ENCODE measurements at regions of chr6 and their contacts with region 1.

Region 1: GRCh38 chr6:49835140-49835539 is 31.2 kb downstream of the CRISP1 start:
- DNase-seq: no peak
- ATAC-seq: no peak
- H3K4me3 ChIP-seq: no peak overlapping the region
- H3K4me3 Mint-ChIP-seq: no peak overlapping the region
- H3K27ac ChIP-seq: no peak overlapping the region
- H3K27ac Mint-ChIP-seq: no peak overlapping the region
- H3K4me1 ChIP-seq: no peaks in the 10 kb centered on the region
- H3K4me1 Mint-ChIP-seq: no peaks in the 10 kb centered on the region
- H3K27me3 ChIP-seq: no peaks in the 10 kb centered on the region
- H3K27me3 Mint-ChIP-seq: no peaks in the 10 kb centered on the region
- CTCF ChIP-seq: no peak

Region 2: DNA sequence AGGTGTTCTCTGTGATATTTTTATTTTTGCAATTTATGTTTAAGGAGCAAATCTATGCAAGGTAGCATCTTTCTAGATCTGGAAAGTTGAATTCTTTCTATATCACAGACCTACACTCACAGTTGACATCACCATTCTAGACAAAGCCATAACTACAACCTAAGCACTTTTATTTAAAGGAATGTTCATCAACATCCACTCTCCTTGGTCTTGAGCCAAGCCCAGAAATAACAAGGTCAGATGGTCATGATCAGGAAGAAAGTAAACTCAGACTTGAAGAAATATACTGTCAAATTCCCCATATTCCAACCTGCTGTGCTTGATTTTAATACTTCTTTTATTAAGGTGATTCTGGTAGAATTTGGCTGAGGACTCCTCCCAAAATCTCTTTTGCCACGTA is 404.3 kb before region 1 on chr6:
- intact Hi-C with region 1: no loop called
- DNase-seq: no peak
- ATAC-seq: no peak
- H3K4me3 ChIP-seq: no peak overlapping the region
- H3K4me3 Mint-ChIP-seq: no peak overlapping the region
- H3K27ac ChIP-seq: no peak overlapping the region
- H3K27ac Mint-ChIP-seq: no peak overlapping the region
- H3K4me1 ChIP-seq: no peaks in the 10 kb centered on the region
- H3K4me1 Mint-ChIP-seq: no peaks in the 10 kb centered on the region
- H3K27me3 ChIP-seq: no peaks in the 10 kb centered on the region
- H3K27me3 Mint-ChIP-seq: no peaks in the 10 kb centered on the region
- CTCF ChIP-seq: no peak

Region 3: GRCh38 chr6:49531774-49532569 is 303.2 kb before region 1 on chr6:
- intact Hi-C with region 1: loop called (anchors 10 kb)
- DNase-seq: peak in 1 of 2 donors; percentile 48
- ATAC-seq: peak in 2 of 3 donors; percentile 55 to 66
- H3K4me3 ChIP-seq: no peak overlapping the region
- H3K4me3 Mint-ChIP-seq: peak overlapping the region; percentile 10
- H3K27ac ChIP-seq: no peak overlapping the region
- H3K27ac Mint-ChIP-seq: no peak overlapping the region
- H3K4me1 ChIP-seq: no peaks in the 10 kb centered on the region
- H3K4me1 Mint-ChIP-seq: no peaks in the 10 kb centered on the region
- H3K27me3 ChIP-seq: no peaks in the 10 kb centered on the region
- H3K27me3 Mint-ChIP-seq: no peaks in the 10 kb centered on the region
- CTCF ChIP-seq: peak; percentile 63

Region 4: DNA sequence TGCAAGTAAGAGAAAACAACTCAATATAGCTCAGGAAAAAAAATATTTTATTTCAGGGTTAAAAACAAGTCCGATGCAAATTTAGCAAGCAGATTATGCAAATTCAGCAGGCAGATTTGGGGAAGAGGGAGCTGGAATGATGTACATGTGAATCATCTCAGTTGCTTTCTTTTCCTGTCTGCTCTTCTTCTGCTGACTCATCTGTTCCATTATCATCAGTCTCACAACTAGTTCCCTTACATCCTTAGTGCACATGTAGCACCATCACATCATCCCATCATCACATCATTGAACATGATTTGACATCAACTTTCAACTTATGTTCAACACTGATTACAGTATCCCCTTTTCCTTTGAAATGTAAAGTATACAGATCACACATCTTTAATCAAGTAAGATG is 145.8 kb after region 1 on chr6:
- intact Hi-C with region 1: no loop called
- DNase-seq: no peak
- ATAC-seq: no peak
- H3K4me3 ChIP-seq: no peak overlapping the region
- H3K4me3 Mint-ChIP-seq: no peak overlapping the region
- H3K27ac ChIP-seq: no peak overlapping the region
- H3K27ac Mint-ChIP-seq: no peak overlapping the region
- H3K4me1 ChIP-seq: no peaks in the 10 kb centered on the region
- H3K4me1 Mint-ChIP-seq: peaks cover 0 to 3% of the 10 kb centered on the region in 2 donors
- H3K27me3 ChIP-seq: no peaks in the 10 kb centered on the region
- H3K27me3 Mint-ChIP-seq: no peaks in the 10 kb centered on the region
- CTCF ChIP-seq: no peak

Region 5: DNA sequence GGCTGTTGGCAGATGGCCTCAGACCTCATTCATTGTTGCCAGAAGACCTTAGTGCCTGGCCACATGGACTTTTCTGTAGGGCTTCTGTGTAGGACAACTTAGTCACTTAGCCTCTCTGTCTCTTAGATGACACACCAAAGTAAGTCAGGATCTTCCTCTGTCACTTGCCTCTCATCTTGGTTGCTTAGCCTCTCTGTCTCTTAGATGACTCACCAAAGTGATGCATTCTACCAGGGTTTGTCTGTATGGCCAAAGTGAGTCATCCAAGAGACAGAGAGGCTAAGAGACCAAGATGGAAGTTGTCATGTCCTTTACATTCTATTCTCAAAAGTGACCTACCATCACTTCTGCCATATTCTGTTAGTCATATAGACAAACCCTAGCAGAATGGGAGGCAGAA is 470.5 kb after region 1 on chr6:
- intact Hi-C with region 1: no loop called
- DNase-seq: no peak
- ATAC-seq: no peak
- H3K4me3 ChIP-seq: no peak overlapping the region
- H3K4me3 Mint-ChIP-seq: no peak overlapping the region
- H3K27ac ChIP-seq: no peak overlapping the region
- H3K27ac Mint-ChIP-seq: no peak overlapping the region
- H3K4me1 ChIP-seq: no peaks in the 10 kb centered on the region
- H3K4me1 Mint-ChIP-seq: no peaks in the 10 kb centered on the region
- H3K27me3 ChIP-seq: no peaks in the 10 kb centered on the region
- H3K27me3 Mint-ChIP-seq: no peaks in the 10 kb centered on the region
- CTCF ChIP-seq: no peak